ENCODE measurements at regions of chr9 and their contacts with region 1.

Region 1: DNA sequence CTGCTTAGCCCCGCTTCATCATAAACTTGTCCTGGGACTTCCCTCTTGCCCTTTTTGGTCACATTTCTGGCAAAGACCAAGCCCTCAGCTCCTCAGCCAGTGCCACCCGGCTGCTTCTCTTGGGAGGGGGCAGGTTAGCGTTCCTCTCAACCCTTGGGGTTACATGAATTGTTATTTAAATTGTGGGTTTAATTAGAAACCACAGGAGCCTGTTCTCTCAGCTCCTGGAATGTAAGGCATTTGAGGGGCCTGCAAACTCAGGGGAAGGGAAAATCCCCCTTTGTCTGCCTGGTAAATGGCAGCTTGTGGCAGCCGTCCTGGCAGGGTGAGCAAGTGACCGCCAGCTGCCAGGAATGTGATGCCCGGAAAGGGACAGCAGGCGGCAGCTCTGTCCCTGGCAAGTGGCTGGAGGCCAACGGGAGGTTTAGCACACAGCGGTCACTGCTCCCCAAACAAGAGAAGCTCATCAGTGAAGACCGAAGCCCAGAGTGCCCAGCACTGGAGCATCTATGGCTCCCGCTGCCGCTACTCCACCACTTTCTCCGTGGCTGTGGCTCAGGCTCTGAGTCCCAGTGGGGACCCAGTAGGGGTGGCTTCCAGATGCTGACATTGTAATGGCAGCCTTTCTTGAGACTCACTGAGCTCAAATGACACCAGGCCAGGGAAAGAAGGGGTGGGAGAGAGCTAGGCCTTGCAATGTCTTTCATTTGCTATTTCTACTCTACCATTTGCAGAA is 51.7 kb downstream of the SHB start:
- DNase-seq: peak; percentile 80
- H3K4me3 ChIP-seq: no peak overlapping the region
- H3K27ac ChIP-seq: peak overlapping the region; percentile 97 to 99
- H3K4me1 ChIP-seq: peaks cover 53 to 61% of the 10 kb centered on the region in 2 experiments
- H3K27me3 ChIP-seq: no peaks in the 10 kb centered on the region
- CTCF ChIP-seq: peak; percentile 45
- EP300 ChIP-seq: peak in 1 of 2 experiments; percentile 43; a peak in 1 of 4 replicates
- RAD21 ChIP-seq: peak; percentile 87

Region 2: DNA sequence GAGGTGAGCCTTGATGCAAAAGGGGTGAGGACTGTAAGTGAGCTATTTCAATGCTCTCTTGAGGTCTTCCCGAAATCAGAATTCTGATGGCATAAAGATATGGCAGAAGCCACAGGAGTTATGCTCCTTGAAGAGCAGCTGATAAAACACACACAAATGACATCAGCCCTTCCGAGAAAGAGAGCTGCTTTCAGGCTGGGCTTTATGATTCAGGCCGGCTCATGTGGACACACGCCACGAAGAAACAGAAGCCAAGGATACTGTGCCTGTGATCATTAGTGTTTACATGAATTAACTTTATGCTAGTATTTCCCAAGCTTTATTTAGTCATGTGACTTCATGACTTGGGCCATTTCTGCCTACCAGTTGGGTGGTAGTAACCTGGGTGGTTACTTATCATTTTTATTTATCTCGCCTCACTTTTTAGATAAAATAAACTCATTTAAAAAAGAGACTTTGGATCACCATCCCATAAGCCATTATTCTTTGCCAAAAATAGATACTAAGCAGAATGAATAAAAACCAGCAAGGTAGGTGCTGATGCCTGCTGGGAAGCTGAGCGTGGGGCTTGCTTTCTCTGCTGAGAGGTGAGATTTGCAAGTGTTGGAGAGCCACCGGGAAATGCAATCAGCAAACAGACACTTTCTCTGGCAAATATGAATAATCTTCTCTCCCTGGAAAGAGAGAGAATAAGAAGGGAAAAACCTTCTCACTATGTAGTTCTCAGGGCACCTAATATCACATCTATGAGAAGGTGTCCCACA is 40.4 kb before region 1 on chr9:
- CTCF ChIA-PET with region 1: interaction called, 20 read pairs
- POLR2A ChIA-PET with region 1: no interaction called
- DNase-seq: no peak
- H3K4me3 ChIP-seq: no peak overlapping the region
- H3K27ac ChIP-seq: peak overlapping the region; percentile 63 to 96
- H3K4me1 ChIP-seq: peaks cover 36 to 40% of the 10 kb centered on the region in 2 experiments
- H3K27me3 ChIP-seq: no peaks in the 10 kb centered on the region
- CTCF ChIP-seq: no peak
- EP300 ChIP-seq: 0 out of 4 replicates have a peak, but pooled peaks of 1 of the 2 experiments have one; percentile 18
- RAD21 ChIP-seq: no peak

Region 3: DNA sequence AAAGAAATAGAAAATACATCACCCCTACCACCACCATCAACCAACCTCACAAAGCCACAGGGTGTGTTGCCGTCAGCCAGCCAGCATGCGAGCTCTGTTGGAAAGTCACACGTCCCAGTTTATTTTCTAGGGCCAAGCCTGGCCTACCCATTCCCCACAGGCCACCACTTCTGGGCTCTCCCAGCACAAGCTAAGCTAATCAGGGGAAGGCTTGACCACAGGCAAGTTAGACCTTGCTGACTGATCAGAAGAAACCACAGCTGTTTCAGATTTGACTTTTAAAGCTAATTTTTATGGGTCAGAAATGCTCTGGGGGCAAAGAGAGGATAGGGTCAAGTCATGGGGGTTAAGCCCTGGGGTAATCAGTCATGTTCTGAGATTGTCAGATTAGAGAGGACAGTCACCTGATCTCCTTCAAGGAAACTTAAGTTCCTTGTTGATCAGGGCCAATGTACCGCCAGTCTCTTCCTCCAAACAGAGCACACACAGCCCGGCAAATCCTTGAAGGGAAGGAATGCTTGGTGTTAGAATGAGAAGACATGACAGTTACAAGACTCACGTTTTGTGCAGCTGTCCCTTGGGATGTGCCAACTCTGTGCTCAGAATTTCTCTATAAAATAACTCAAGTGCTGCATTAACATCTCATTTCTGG is 44.1 kb after region 1 on chr9:
- CTCF ChIA-PET with region 1: interaction called, 18 read pairs
- POLR2A ChIA-PET with region 1: interaction called, 7 read pairs
- DNase-seq: no peak
- H3K4me3 ChIP-seq: no peak overlapping the region
- H3K27ac ChIP-seq: peak overlapping the region; percentile 9 to 67; a peak in 2 of 4 replicates
- H3K4me1 ChIP-seq: peaks cover 64 to 68% of the 10 kb centered on the region in 2 experiments; a peak in 3 of 4 replicates
- H3K27me3 ChIP-seq: no peaks in the 10 kb centered on the region
- CTCF ChIP-seq: no peak
- EP300 ChIP-seq: no peak
- RAD21 ChIP-seq: no peak

Region 4: GRCh38 chr9:38227061-38227540 is 209.8 kb after region 1 on chr9:
- CTCF ChIA-PET with region 1: interaction called, 13 read pairs
- POLR2A ChIA-PET with region 1: no interaction called
- DNase-seq: peak; percentile 75
- H3K4me3 ChIP-seq: peak overlapping the region; percentile 16 to 47; a peak in 3 of 4 replicates
- H3K27ac ChIP-seq: peak overlapping the region in 1 of 2 experiments; percentile 88; a peak in 2 of 4 replicates
- H3K4me1 ChIP-seq: peaks cover 8 to 29% of the 10 kb centered on the region in 2 experiments; a peak in 3 of 4 replicates
- H3K27me3 ChIP-seq: peaks cover 12% of the 10 kb centered on the region; the same call in 1 of the 2 replicates
- CTCF ChIP-seq: no peak
- EP300 ChIP-seq: peak in 1 of 2 experiments; percentile 54; a peak in 2 of 4 replicates
- RAD21 ChIP-seq: peak; percentile 34

Region 5: DNA sequence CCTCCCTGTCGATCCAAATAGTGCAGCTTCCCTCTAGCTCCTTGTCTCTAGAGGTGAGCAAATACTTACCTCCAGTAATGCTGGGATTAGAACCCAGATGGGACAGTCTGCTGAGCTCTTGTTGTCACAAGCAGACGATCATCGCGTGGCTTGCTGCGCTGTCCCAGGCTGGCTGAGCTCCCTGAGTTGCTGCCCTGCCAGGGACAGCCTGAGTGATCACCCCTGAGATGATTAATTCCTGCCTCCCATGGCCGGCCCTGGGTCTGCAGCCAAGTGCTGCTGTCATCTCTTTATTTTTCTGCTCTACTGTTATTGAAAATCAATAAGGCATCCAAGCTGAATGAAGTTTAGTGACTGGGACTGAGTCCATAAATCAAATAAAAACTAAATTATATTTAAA is 281.2 kb after region 1 on chr9:
- CTCF ChIA-PET with region 1: no interaction called
- POLR2A ChIA-PET with region 1: no interaction called
- DNase-seq: no peak
- H3K4me3 ChIP-seq: no peak overlapping the region
- H3K27ac ChIP-seq: no peak overlapping the region
- H3K4me1 ChIP-seq: peaks cover 0 to 14% of the 10 kb centered on the region in 2 experiments; a peak in 2 of 4 replicates
- H3K27me3 ChIP-seq: peaks cover 6% of the 10 kb centered on the region; the same call in 1 of the 2 replicates
- CTCF ChIP-seq: no peak
- EP300 ChIP-seq: no peak
- RAD21 ChIP-seq: no peak

Measured in SK-N-SH (cell line).